ENCODE measurements at regions of chr12 and their contacts with region 1.

Region 1: GRCh38 chr12:56636675-56637540 is 6.8 kb upstream of the BAZ2A start:
- DNase-seq: peak; percentile 95
- ATAC-seq: peak; percentile 60
- H3K4me3 Mint-ChIP-seq: peak overlapping the region; percentile 88
- H3K27ac Mint-ChIP-seq: peak overlapping the region; percentile 93
- H3K4me1 Mint-ChIP-seq: peaks cover 63% of the 10 kb centered on the region
- H3K27me3 Mint-ChIP-seq: no peaks in the 10 kb centered on the region

Region 2: GRCh38 chr12:56127888-56128669 is 508.8 kb before region 1 on chr12 and contains the start of gene ESYT1:
- CTCF ChIA-PET with region 1: interaction called, 10 read pairs
- POLR2A ChIA-PET with region 1: no interaction called
- DNase-seq: peak; percentile 100
- ATAC-seq: peak; percentile 91
- H3K4me3 Mint-ChIP-seq: peak within 1 kb of the TSS; percentile 88
- H3K27ac Mint-ChIP-seq: peak within 1 kb of the TSS; percentile 91
- H3K4me1 Mint-ChIP-seq: peaks cover 70% of the 10 kb centered on the region
- H3K27me3 Mint-ChIP-seq: no peaks in the 10 kb centered on the region
- total RNA-seq, gene ESYT1: 317 to 333 TPM

Region 3: DNA sequence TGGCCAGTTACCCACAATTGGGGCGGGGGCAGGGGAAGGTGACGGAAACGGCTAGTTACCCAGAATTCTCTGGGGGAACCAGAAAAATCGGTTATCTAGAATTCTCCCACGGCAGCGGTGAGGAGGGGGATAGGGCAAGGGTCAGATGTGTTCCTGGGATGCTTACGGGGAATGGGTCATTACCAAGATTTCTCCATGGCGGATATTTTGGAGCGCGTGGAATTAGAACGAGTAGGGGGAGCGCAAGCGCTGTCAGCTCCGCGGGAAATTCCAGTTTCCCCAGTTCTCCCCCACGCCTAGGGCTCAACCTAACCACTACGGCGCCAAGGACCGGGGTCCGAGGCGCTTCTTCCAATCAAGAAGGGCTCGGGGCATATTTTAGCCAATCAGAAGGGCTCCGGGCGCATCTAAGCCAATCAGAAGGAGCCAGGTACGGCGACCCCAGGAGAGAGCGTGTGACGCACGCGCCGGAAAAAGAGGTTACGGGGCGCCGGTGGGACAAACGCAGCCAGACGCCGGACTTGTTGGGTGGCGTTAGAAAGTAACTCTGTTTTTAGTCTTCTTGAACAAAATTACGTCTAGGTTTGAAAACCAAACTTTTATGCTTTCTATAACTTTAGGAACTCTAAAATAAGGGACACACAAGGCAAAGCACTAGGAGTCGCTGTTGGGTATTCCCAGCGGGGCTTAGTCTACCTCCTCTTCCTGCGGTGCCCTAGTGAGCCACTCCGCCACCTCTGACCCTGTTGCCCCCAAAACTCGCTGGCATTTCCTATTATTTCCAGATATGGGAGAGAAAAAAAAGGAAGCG is 303.0 kb before region 1 on chr12 and contains the start of gene PAN2:
- CTCF ChIA-PET with region 1: no interaction called
- POLR2A ChIA-PET with region 1: no interaction called
- DNase-seq: peak; percentile 97
- ATAC-seq: peak; percentile 94
- H3K4me3 Mint-ChIP-seq: peak within 1 kb of the TSS; percentile 96
- H3K27ac Mint-ChIP-seq: peak within 1 kb of the TSS; percentile 99
- H3K4me1 Mint-ChIP-seq: peaks cover 45% of the 10 kb centered on the region
- H3K27me3 Mint-ChIP-seq: no peaks in the 10 kb centered on the region
- total RNA-seq, gene PAN2: 61.8 to 63.7 TPM

Region 4: GRCh38 chr12:56476972-56477432 is 159.9 kb before region 1 on chr12:
- CTCF ChIA-PET with region 1: no interaction called
- POLR2A ChIA-PET with region 1: no interaction called
- DNase-seq: no peak
- ATAC-seq: no peak
- H3K4me3 Mint-ChIP-seq: no peak overlapping the region
- H3K27ac Mint-ChIP-seq: no peak overlapping the region
- H3K4me1 Mint-ChIP-seq: peaks cover 8% of the 10 kb centered on the region
- H3K27me3 Mint-ChIP-seq: no peaks in the 10 kb centered on the region

Region 5: DNA sequence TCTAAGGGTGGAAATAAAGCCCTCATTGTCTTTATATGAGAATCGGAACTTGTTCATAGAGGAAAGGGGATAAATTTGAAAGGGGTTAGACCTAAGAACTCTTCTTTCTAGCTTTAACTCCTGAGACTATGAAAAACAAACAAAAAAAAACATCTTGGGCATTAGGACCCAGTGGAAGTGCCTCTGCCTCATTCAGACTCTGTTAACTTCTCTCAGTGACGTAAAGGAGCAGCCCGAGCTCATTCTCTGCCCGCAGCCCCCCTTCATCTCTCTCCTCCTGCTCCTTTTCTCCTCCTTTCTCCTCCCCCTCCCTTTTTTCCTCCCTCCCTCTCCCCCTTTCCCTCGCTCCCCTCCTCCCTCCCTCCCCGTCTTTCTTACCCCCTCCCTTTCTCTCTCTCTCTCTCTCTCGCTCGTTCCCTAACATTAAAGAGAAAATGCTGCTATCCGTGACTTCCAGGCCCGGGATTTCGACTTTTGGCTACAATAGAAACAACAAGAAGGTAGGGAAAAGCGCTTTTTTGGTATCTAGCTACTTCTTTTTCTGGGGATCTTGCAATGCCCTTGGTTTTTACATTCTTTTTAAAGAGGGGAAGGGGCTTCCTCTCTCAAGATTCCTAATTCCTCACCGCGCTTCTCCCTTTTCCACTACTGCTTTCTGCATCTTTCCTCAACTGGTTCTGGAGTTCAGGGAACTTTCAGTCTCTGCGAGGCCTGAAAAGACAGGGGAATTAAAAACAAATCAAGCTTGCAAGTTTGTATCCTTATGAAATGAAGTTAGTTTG is 115.1 kb before region 1 on chr12 and contains the start of gene RBMS2:
- CTCF ChIA-PET with region 1: interaction called, 12 read pairs
- POLR2A ChIA-PET with region 1: interaction called, 3 read pairs
- DNase-seq: peak; percentile 67
- ATAC-seq: peak; percentile 94
- H3K4me3 Mint-ChIP-seq: peak within 1 kb of the TSS; percentile 75
- H3K27ac Mint-ChIP-seq: peak within 1 kb of the TSS; percentile 82
- H3K4me1 Mint-ChIP-seq: peaks cover 31% of the 10 kb centered on the region
- H3K27me3 Mint-ChIP-seq: no peaks in the 10 kb centered on the region
- total RNA-seq, gene RBMS2: 4.8 to 5.5 TPM

Region 6: GRCh38 chr12:56601503-56601902 is 35.4 kb before region 1 on chr12:
- CTCF ChIA-PET with region 1: interaction called, 13 read pairs
- POLR2A ChIA-PET with region 1: interaction called, 6 read pairs
- DNase-seq: peak; percentile 50
- ATAC-seq: no peak
- H3K4me3 Mint-ChIP-seq: no peak overlapping the region
- H3K27ac Mint-ChIP-seq: no peak overlapping the region
- H3K4me1 Mint-ChIP-seq: no peaks in the 10 kb centered on the region
- H3K27me3 Mint-ChIP-seq: no peaks in the 10 kb centered on the region

Region 7: GRCh38 chr12:56622535-56622934 is 14.4 kb before region 1 on chr12:
- CTCF ChIA-PET with region 1: interaction called, 47 read pairs
- POLR2A ChIA-PET with region 1: interaction called, 6 read pairs
- DNase-seq: no peak
- ATAC-seq: no peak
- H3K4me3 Mint-ChIP-seq: no peak overlapping the region
- H3K27ac Mint-ChIP-seq: no peak overlapping the region
- H3K4me1 Mint-ChIP-seq: peaks cover 36% of the 10 kb centered on the region
- H3K27me3 Mint-ChIP-seq: no peaks in the 10 kb centered on the region

Region 8: GRCh38 chr12:56724972-56725722 is 88.2 kb after region 1 on chr12 and contains the start of gene NACA:
- CTCF ChIA-PET with region 1: interaction called, 13 read pairs
- POLR2A ChIA-PET with region 1: interaction called, 23 read pairs
- DNase-seq: peak; percentile 100
- ATAC-seq: peak; percentile 98
- H3K4me3 Mint-ChIP-seq: peak within 1 kb of the TSS; percentile 98
- H3K27ac Mint-ChIP-seq: peak within 1 kb of the TSS; percentile 97
- H3K4me1 Mint-ChIP-seq: peaks cover 50% of the 10 kb centered on the region
- H3K27me3 Mint-ChIP-seq: no peaks in the 10 kb centered on the region
- total RNA-seq, gene NACA: 793 to 820 TPM

Region 9: DNA sequence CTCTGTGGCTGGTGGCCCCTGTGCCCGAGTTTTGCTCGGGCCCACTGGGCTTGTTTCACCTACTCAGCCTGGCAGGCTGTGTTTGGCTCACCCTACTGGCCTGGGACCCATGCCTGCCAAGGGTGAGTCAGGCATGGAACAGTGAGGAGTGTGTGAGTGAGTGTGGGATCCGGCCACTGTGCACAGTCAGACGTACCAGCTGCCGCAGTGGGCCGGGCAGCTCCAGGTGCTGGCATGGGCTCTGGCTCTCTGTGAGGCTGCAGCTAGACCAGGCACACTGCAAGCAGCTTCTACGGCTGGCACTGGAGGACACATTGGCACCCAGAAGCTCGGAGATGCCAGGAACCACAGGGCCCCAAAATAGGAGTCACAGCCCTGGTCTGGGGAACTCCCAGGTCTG is 166.8 kb after region 1 on chr12:
- CTCF ChIA-PET with region 1: no interaction called
- POLR2A ChIA-PET with region 1: no interaction called
- DNase-seq: no peak
- ATAC-seq: no peak
- H3K4me3 Mint-ChIP-seq: no peak overlapping the region
- H3K27ac Mint-ChIP-seq: no peak overlapping the region
- H3K4me1 Mint-ChIP-seq: no peaks in the 10 kb centered on the region
- H3K27me3 Mint-ChIP-seq: peaks cover 2% of the 10 kb centered on the region

Region 10: DNA sequence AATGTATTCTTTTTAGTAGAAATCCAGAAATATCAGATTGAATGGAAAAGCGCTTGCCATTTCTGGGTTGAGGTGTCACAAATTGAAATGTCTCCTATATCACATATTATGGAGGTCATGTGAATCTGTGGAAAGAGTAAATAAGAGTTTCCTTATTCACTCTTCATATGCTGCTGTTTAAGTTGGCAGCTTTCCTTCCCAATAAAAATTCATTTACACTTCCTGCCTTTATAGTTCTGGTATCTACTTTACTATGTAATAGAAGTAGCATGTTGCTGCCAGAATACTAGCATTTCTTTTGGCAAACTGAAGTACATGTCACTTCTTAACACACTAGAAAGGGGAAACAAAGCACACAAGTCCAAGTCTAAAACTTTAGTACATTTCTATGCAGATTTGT is 236.5 kb after region 1 on chr12:
- CTCF ChIA-PET with region 1: no interaction called
- POLR2A ChIA-PET with region 1: no interaction called
- DNase-seq: no peak
- ATAC-seq: no peak
- H3K4me3 Mint-ChIP-seq: no peak overlapping the region
- H3K27ac Mint-ChIP-seq: no peak overlapping the region
- H3K4me1 Mint-ChIP-seq: no peaks in the 10 kb centered on the region
- H3K27me3 Mint-ChIP-seq: peaks cover 7% of the 10 kb centered on the region

Measured in activated CD8-positive, alpha-beta T cell treated with anti-CD3 and anti-CD28 coated beads, Interleukin-2, amount 10 ng/mL, durations not matched to agents 7 days and 5 days (primary cell).